Naive thymus-derived CD4-positive, alpha-beta T cell (primary cell): ENCODE measurements at regions of chr2 and their contacts with region 1.

Region 1: DNA sequence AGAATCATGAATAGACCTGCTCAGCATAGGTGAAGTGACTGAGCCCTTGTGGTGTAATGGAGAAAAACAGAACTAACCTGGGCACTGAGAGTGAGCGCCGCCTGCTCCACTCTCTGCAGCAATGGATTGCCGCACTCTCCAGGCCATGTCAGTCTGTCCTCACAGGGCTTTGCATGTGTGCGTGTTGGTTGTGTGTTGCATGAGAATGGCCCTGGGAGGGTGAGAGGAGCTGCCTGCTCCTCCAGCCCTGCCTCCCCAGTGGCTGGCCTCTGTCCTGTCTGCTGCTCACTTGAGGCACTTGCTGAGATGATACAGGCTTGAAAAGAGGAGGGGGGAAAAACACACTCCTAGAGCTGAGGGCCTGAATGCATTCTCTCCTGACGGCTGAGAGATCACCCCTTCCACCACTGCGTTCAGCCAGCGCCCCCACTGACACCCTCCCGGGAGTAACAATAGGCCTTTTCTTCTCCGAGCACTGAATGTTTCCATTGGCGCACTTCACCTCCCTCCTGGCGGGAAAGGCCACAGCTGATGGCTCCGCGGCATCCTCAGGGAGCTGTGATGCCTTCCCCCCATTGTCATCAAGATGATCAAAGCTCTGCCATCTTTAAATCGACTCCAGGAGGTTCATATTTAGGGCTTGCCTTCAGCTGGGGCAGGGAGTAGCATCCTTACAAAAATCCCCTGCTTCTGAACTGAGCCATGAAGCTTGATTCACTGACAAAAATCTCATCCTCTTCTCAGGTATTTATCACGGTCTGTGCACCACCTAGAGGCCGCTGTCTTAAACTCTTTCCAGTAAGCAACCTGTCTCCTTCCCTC is 49.9 kb upstream of the DAPL1 start:
- DNase-seq: peak in 7 of 9 donors; percentile 10 to 40 (median 34)
- ATAC-seq: peak; percentile 49
- H3K4me3 ChIP-seq: no peak overlapping the region
- H3K4me3 Mint-ChIP-seq: no peak overlapping the region
- H3K27ac ChIP-seq: no peak overlapping the region
- H3K27ac Mint-ChIP-seq: no peak overlapping the region
- H3K4me1 ChIP-seq: no peaks in the 10 kb centered on the region
- H3K4me1 Mint-ChIP-seq: peaks cover 0 to 5% (median 0%) of the 10 kb centered on the region in 7 donors
- H3K27me3 ChIP-seq: no peaks in the 10 kb centered on the region
- H3K27me3 Mint-ChIP-seq: peaks cover 15 to 34% (median 23%) of the 10 kb centered on the region in 5 donors

Region 2: DNA sequence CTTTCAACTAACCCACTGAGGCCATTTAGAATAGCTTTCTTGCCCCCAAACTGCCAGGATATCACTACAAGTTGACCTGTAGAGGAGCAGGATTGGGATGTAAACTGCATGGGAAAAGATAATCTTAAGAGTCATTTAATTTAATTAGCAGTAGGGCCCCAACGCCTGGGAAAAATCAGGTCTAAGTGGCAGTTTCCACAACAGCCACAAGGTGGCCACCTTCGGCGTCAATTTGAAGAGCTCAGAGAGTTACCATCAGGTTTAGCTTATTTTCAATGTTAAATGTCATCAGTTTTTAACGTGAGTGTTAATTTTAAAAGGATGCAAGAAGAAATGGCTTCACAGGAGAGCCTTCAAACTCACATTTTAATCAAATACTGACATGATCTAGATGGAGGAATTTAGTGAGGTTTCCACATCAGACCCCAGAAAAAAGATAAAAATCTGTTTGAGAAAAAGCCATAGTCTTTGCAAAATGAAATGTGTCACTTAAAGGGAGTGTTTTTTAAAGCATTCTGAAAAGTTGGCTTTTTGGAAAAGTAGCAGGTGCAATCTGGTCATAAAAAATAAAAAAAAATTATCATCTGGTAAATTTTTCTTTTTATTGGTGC is 720.9 kb before region 1 on chr2:
- CTCF ChIA-PET with region 1: interaction called, 48 read pairs
- POLR2A ChIA-PET with region 1: no interaction called
- intact Hi-C with region 1: loop called (anchors 1 kb)
- DNase-seq: peak in 8 of 9 donors; percentile 14 to 60 (median 41)
- ATAC-seq: peak; percentile 70
- H3K4me3 ChIP-seq: no peak overlapping the region
- H3K4me3 Mint-ChIP-seq: no peak overlapping the region
- H3K27ac ChIP-seq: no peak overlapping the region
- H3K27ac Mint-ChIP-seq: no peak overlapping the region
- H3K4me1 ChIP-seq: no peaks in the 10 kb centered on the region
- H3K4me1 Mint-ChIP-seq: peaks cover 4 to 15% (median 9%) of the 10 kb centered on the region in 7 donors
- H3K27me3 ChIP-seq: no peaks in the 10 kb centered on the region
- H3K27me3 Mint-ChIP-seq: peaks cover 0 to 10% (median 0%) of the 10 kb centered on the region in 5 donors

Region 3: DNA sequence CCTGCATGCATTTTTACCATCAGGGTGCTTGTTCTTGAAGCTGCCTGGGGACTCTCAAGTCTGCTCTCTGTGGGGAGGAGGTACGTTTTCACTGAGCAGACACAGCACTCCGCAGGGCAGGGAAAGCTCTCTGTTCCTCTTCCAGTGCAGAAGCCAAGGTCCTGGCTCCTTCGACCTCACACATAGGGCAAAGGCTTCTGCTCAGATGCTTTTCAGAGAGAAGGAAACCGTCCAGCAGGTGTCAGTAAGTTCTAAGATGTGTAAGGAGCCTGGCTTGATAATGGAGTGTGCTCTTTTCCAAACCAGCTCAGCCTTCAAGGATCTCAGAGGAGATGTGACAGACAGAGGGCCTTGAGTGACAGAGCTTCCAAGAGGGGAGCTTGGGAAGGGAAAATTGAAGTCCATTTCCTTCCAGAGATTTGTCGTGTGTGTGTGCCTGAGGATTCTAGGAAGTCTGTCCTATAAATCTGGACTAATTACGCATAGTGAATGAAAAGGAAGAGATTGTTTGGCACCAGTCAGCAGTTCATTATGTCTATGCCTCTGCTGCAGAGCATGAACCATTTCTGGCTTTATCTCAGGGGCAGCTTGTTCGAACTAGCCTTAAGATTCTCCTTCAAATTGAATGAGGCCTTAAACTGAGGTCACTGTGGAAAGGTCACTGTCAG is 710.9 kb before region 1 on chr2:
- CTCF ChIA-PET with region 1: interaction called, 14 read pairs
- POLR2A ChIA-PET with region 1: no interaction called
- intact Hi-C with region 1: loop called in 1 of 2 experiments (anchors 1 kb)
- DNase-seq: peak in 2 of 9 donors; percentile 21
- ATAC-seq: peak; percentile 69
- H3K4me3 ChIP-seq: no peak overlapping the region
- H3K4me3 Mint-ChIP-seq: no peak overlapping the region
- H3K27ac ChIP-seq: no peak overlapping the region
- H3K27ac Mint-ChIP-seq: no peak overlapping the region
- H3K4me1 ChIP-seq: no peaks in the 10 kb centered on the region
- H3K4me1 Mint-ChIP-seq: no peaks in the 10 kb centered on the region
- H3K27me3 ChIP-seq: no peaks in the 10 kb centered on the region
- H3K27me3 Mint-ChIP-seq: peaks cover 0 to 44% (median 9%) of the 10 kb centered on the region in 5 donors

Region 4: DNA sequence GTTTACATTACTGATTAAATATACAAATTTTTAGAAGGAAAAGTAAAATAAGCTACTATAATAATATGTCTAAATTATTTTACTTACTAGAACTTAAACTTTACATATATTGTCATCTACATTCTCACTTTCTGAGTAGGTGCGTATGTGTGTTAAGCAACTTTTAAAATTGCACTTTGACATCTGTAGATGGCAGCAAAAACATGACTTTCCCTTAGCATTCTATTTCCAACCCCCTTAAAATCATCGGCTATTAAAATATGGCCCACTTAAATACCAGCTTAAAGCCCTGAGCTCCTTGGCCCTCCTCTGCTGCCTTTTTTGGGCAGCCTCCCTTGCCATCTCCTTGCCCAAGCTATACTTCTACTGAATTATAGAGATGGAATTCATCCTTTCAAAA is 565.6 kb before region 1 on chr2:
- CTCF ChIA-PET with region 1: interaction called, 8 read pairs
- POLR2A ChIA-PET with region 1: no interaction called
- intact Hi-C with region 1: loop called (anchors 1 to 5 kb)
- DNase-seq: no peak
- ATAC-seq: no peak
- H3K4me3 ChIP-seq: no peak overlapping the region
- H3K4me3 Mint-ChIP-seq: no peak overlapping the region
- H3K27ac ChIP-seq: no peak overlapping the region
- H3K27ac Mint-ChIP-seq: no peak overlapping the region
- H3K4me1 ChIP-seq: no peaks in the 10 kb centered on the region
- H3K4me1 Mint-ChIP-seq: peaks cover 0 to 2% (median 0%) of the 10 kb centered on the region in 7 donors
- H3K27me3 ChIP-seq: peaks cover 0 to 5% of the 10 kb centered on the region in 2 donors
- H3K27me3 Mint-ChIP-seq: peaks cover 39 to 49% (median 47%) of the 10 kb centered on the region in 5 donors